Mammary epithelial cell (primary cell): ENCODE measurements at regions of chr3 and their contacts with region 1.

Region 1: GRCh38 chr3:32947789-32948238 is 3.6 kb upstream of the CCR4 start:
- DNase-seq: peak; percentile 76
- H3K4me3 ChIP-seq: no peak overlapping the region
- H3K27ac ChIP-seq: no peak overlapping the region
- H3K4me1 ChIP-seq: no peaks in the 10 kb centered on the region
- H3K27me3 ChIP-seq: no peaks in the 10 kb centered on the region
- CTCF ChIP-seq: peak; percentile 73 to 87

Region 2: GRCh38 chr3:32391643-32392535 is 555.9 kb before region 1 on chr3 and contains the start of gene CMTM7:
- CTCF ChIA-PET with region 1: no interaction called
- dilution Hi-C with region 1: no loop called
- in situ Hi-C with region 1: no loop called
- intact Hi-C with region 1: no loop called
- DNase-seq: peak; percentile 80
- H3K4me3 ChIP-seq: peak within 1 kb of the TSS; percentile 84 to 87 (median 84)
- H3K27ac ChIP-seq: peak within 1 kb of the TSS; percentile 73
- H3K4me1 ChIP-seq: peaks cover 21% of the 10 kb centered on the region
- H3K27me3 ChIP-seq: no peaks in the 10 kb centered on the region
- CTCF ChIP-seq: peak in 1 of 2 donors; percentile 14
- total RNA-seq, gene CMTM7: 35.8 to 62.1 TPM

Region 3: GRCh38 chr3:33064929-33065328 is 117.1 kb after region 1 on chr3:
- CTCF ChIA-PET with region 1: no interaction called
- dilution Hi-C with region 1: no loop called
- in situ Hi-C with region 1: loop called (anchors 5 kb)
- intact Hi-C with region 1: loop called (anchors 1 kb)
- DNase-seq: no peak
- H3K4me3 ChIP-seq: no peak overlapping the region
- H3K27ac ChIP-seq: no peak overlapping the region
- H3K4me1 ChIP-seq: no peaks in the 10 kb centered on the region
- H3K27me3 ChIP-seq: no peaks in the 10 kb centered on the region
- CTCF ChIP-seq: peak in 1 of 2 donors; percentile 36

Region 4: GRCh38 chr3:33074217-33075067 is 126.6 kb after region 1 on chr3:
- CTCF ChIA-PET with region 1: no interaction called
- dilution Hi-C with region 1: no loop called
- in situ Hi-C with region 1: loop called (anchors 5 kb)
- intact Hi-C with region 1: loop called (anchors 1 kb)
- DNase-seq: peak; percentile 31
- H3K4me3 ChIP-seq: no peak overlapping the region
- H3K27ac ChIP-seq: no peak overlapping the region
- H3K4me1 ChIP-seq: no peaks in the 10 kb centered on the region
- H3K27me3 ChIP-seq: no peaks in the 10 kb centered on the region
- CTCF ChIP-seq: peak; percentile 96 to 97

Region 5: DNA sequence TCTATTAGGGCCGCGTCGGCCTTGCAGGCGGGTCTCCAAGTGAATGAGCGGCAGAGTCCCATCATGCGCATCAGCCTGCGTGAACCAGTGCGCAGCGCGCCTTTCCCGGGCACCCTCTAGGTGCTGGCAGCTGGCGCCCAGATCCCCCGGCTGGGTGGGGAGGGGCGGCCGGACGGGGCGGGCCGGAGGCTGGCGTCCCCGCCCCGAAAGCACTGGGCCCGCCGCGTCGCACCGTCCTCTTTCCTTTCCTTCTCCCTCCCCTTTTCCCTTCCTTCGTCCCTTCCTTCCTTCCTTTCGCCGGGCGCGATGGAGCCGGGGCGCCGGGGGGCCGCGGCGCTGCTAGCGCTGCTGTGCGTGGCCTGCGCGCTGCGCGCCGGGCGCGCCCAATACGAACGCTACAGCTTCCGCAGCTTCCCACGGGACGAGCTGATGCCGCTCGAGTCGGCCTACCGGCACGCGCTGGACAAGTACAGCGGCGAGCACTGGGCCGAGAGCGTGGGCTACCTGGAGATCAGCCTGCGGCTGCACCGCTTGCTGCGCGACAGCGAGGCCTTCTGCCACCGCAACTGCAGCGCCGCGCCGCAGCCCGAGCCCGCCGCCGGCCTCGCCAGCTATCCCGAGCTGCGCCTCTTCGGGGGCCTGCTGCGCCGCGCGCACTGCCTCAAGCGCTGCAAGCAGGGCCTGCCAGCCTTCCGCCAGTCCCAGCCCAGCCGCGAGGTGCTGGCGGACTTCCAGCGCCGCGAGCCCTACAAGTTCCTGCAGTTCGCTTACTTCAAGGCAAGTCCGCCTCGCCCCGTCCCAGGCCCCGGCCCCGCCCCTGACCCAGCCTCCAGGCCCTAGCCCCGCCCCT is 166.2 kb after region 1 on chr3 and contains the start of gene CRTAP:
- CTCF ChIA-PET with region 1: no interaction called
- dilution Hi-C with region 1: no loop called
- in situ Hi-C with region 1: no loop called
- intact Hi-C with region 1: loop called (anchors 5 kb)
- DNase-seq: peak; percentile 95
- H3K4me3 ChIP-seq: peak within 1 kb of the TSS; percentile 52 to 82 (median 79)
- H3K27ac ChIP-seq: peak within 1 kb of the TSS; percentile 70
- H3K4me1 ChIP-seq: no peaks in the 10 kb centered on the region
- H3K27me3 ChIP-seq: no peaks in the 10 kb centered on the region
- CTCF ChIP-seq: no peak
- total RNA-seq, gene CRTAP: 109 to 171 TPM

Region 6: DNA sequence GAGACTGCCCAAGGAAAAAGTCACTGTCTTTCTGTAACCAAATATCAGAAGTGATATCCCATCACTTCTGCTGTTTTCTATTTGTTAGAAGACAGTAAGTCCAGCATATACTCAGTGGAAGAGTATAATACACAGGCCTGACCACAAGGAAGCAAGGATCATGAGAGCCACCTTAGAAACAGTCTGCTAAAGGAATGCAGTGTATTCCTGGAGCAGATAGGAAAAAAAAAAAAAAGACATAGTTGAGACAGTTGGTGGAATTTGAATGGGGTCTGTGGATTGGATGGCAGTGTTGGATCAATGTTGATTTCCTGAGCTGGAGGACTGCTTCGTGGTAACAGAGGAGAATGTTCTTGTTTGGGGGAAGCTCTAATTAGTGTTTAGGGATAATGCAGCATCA is 302.9 kb after region 1 on chr3:
- CTCF ChIA-PET with region 1: no interaction called
- dilution Hi-C with region 1: no loop called
- in situ Hi-C with region 1: no loop called
- intact Hi-C with region 1: loop called (anchors 10 kb)
- DNase-seq: no peak
- H3K4me3 ChIP-seq: no peak overlapping the region
- H3K27ac ChIP-seq: no peak overlapping the region
- H3K4me1 ChIP-seq: no peaks in the 10 kb centered on the region
- H3K27me3 ChIP-seq: no peaks in the 10 kb centered on the region
- CTCF ChIP-seq: no peak

Region 7: GRCh38 chr3:33312361-33312760 is 364.5 kb after region 1 on chr3:
- CTCF ChIA-PET with region 1: no interaction called
- dilution Hi-C with region 1: no loop called
- in situ Hi-C with region 1: no loop called
- intact Hi-C with region 1: no loop called
- DNase-seq: no peak
- H3K4me3 ChIP-seq: no peak overlapping the region
- H3K27ac ChIP-seq: no peak overlapping the region
- H3K4me1 ChIP-seq: peaks cover 11% of the 10 kb centered on the region
- H3K27me3 ChIP-seq: no peaks in the 10 kb centered on the region
- CTCF ChIP-seq: no peak

Region 8: DNA sequence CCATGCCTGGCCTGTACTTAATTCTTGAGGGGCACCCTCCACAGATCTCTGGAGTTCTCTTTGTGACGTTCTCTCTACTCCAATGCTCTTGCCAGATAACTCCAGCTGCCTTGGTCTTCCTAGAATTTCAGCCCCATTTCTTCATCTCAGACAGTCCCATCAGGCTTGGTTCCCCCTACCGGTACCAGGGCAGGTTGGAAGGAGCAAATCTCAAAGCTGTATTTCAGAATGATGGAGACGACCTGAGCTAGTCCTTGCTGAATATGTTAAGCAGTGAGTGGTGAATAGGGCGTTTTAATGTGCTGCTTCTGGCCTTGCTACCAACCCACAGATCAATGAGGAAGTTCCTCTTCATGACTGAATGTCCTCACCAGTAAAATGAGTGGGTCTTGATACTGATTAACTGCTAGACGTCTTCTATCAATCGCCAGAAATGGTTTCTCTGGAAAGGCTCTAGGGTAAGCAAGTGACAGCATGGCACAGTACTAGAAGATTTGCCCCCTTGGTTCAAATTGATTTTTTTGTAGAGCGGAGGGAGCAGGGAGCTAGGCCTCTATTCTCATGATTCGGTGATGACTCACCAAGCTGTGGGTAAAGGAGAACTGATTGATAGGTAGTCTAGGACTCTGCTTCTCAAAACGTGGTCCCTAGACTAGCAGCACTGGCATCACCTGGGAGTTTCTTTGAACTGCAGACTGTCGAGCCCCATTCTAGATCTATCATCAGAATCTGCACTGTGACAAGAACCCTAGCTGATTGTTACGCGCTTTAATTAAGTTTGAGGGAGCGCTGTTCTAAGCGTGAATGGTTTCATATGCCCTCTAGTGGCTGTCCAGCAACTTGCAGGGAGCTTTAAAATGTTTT is 424.6 kb after region 1 on chr3:
- CTCF ChIA-PET with region 1: no interaction called
- dilution Hi-C with region 1: no loop called
- in situ Hi-C with region 1: no loop called
- intact Hi-C with region 1: loop called (anchors 1 kb)
- DNase-seq: peak; percentile 78
- H3K4me3 ChIP-seq: no peak overlapping the region
- H3K27ac ChIP-seq: peak overlapping the region; percentile 13
- H3K4me1 ChIP-seq: peaks cover 10% of the 10 kb centered on the region
- H3K27me3 ChIP-seq: no peaks in the 10 kb centered on the region
- CTCF ChIP-seq: peak; percentile 84 to 97